IMR-90 (cell line): ENCODE measurements at regions of chr12 and their contacts with region 1.

Region 1: DNA sequence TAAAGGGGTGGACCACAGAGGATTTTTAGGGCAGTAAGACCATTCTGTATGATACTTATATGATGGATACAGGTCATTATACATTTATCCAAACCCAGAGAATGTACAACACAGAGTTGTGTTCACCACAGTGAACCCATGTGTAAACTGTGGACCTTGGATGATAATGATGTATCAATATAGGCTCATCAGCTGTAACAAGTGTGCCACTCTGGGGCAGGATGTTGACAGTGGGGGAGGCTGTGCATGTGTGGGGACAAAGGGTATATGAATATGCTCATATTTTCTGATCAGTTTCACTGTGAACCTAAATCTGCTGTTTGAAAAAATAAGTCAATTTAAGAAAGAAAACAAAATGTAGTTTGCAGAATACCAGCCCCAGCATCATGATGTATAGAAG is 14.2 kb upstream of the OS9 start:
- DNase-seq: no peak
- ATAC-seq: no peak
- H3K4me3 ChIP-seq: no peak overlapping the region
- H3K27ac ChIP-seq: no peak overlapping the region
- H3K4me1 ChIP-seq: 0 out of 2 replicates have a peak, but pooled peaks cover 2% of the 10 kb centered on the region
- H3K27me3 ChIP-seq: no peaks in the 10 kb centered on the region
- CTCF ChIP-seq: no peak
- POLR2A ChIP-seq: no peak
- RAD21 ChIP-seq: no peak

Region 2: GRCh38 chr12:57722716-57723629 is 43.3 kb after region 1 on chr12:
- CTCF ChIA-PET with region 1: no interaction called
- POLR2A ChIA-PET with region 1: interaction called, 12 read pairs
- dilution Hi-C with region 1: no loop called
- in situ Hi-C with region 1: no loop called
- intact Hi-C with region 1: no loop called
- DNase-seq: no peak
- ATAC-seq: no peak
- H3K4me3 ChIP-seq: no peak overlapping the region
- H3K27ac ChIP-seq: no peak overlapping the region
- H3K4me1 ChIP-seq: 0 out of 2 replicates have a peak, but pooled peaks cover 4% of the 10 kb centered on the region
- H3K27me3 ChIP-seq: no peaks in the 10 kb centered on the region; the same call in 1 of the 2 replicates
- CTCF ChIP-seq: no peak
- POLR2A ChIP-seq: no peak
- RAD21 ChIP-seq: no peak

Region 3: DNA sequence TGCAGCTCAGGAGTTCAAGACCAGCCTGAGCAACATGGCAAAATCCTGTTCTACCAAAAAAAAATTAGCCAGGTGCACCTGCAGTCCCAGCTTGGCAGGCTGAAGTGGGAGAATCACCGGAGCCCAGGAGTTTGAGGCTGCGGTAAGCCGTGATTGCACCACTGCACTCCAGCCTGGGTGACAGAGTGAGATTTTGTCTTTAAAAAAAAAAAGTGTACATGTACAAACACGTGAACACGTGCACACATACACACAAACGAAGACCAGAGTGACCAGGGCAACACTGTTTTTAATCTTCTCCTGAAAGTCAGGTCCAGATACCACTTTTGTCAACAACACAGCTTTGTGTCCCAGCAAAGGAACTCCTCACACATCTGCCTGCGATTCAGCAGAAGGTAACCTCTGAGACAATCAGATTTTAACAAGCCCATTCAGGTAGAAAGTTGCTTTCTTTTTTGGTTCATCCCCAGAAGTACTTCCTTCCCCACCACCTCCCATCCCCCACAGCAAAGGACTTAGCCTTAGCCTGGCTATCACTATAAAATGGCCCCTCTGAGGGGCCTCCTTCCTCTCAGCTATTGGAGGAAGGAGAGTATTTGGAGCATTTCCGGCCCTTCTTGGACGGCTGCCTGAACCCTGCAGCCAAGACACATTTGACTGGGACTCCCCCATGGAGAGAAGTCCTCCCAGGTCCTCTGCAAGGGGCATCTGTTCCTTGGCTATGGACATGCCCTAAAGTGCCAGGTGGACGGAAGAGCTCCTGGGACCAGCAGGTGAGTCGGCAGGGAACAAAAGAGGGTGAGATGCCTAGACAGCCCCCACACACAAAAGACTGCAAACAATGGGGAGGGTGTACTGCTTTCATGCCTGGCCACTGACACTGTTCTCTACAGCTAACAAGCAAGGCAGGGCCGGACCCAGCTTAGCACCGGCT is 157.0 kb after region 1 on chr12:
- CTCF ChIA-PET with region 1: no interaction called
- POLR2A ChIA-PET with region 1: no interaction called
- dilution Hi-C with region 1: no loop called
- in situ Hi-C with region 1: no loop called
- intact Hi-C with region 1: no loop called
- DNase-seq: peak; percentile 86
- ATAC-seq: peak; percentile 66
- H3K4me3 ChIP-seq: no peak overlapping the region
- H3K27ac ChIP-seq: peak overlapping the region; percentile 77
- H3K4me1 ChIP-seq: peaks cover 66% of the 10 kb centered on the region
- H3K27me3 ChIP-seq: no peaks in the 10 kb centered on the region
- CTCF ChIP-seq: no peak
- POLR2A ChIP-seq: no peak
- RAD21 ChIP-seq: no peak